CD8-positive, alpha-beta memory T cell (primary cell): ENCODE measurements at regions of chr10 and their contacts with region 1.

Region 1: GRCh38 chr10:69237528-69238159 is 17.5 kb downstream of the HKDC1 start:
- DNase-seq: peak; percentile 66 to 87 (median 78)
- H3K4me3 ChIP-seq: no peak overlapping the region
- H3K4me3 Mint-ChIP-seq: no peak overlapping the region
- H3K27ac ChIP-seq: no peak overlapping the region
- H3K27ac Mint-ChIP-seq: peak overlapping the region in 2 of 8 donors; percentile 6 to 8
- H3K4me1 ChIP-seq: peaks cover 20% of the 10 kb centered on the region
- H3K4me1 Mint-ChIP-seq: peaks cover 12 to 21% (median 16%) of the 10 kb centered on the region in 3 donors
- H3K27me3 ChIP-seq: no peaks in the 10 kb centered on the region
- H3K27me3 Mint-ChIP-seq: peaks cover 0 to 2% of the 10 kb centered on the region in 2 donors

Region 2: GRCh38 chr10:69061305-69062161 is 176.1 kb before region 1 on chr10:
- CTCF ChIA-PET with region 1: no interaction called
- POLR2A ChIA-PET with region 1: no interaction called
- DNase-seq: peak in 3 of 5 donors; percentile 38 to 52 (median 41)
- H3K4me3 ChIP-seq: peak overlapping the region; percentile 29
- H3K4me3 Mint-ChIP-seq: peak overlapping the region; percentile 47 to 86 (median 75)
- H3K27ac ChIP-seq: peak overlapping the region; percentile 10
- H3K27ac Mint-ChIP-seq: peak overlapping the region; percentile 57 to 95 (median 88)
- H3K4me1 ChIP-seq: peaks cover 31% of the 10 kb centered on the region
- H3K4me1 Mint-ChIP-seq: peaks cover 30 to 41% (median 33%) of the 10 kb centered on the region in 3 donors
- H3K27me3 ChIP-seq: no peaks in the 10 kb centered on the region
- H3K27me3 Mint-ChIP-seq: no peaks in the 10 kb centered on the region

Region 3: DNA sequence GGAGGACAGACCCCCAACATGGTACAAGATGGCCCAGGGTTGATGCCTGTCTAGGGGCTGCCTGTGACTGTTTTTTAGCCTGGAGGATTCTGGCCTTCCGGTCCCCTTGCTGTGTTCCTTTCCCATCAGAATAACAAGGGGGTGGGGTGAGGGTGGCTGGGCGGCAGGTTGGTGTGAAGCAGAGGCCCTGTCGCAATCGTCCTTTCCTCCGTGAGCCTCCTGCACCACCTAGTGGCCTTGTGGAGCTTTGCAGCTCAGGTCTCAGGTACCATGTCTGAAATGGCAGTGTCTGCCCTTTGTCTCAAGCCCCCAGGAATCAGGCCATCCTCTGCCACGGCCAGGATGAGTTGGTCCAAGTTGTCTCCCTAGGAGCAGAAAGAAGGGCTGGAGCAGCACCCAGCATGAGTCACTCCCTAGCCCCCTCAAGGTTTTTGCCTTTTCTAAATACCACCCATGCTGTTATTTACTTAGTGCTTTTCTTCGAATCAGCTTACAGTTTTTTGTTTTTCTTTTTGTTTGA is 154.9 kb after region 1 on chr10:
- CTCF ChIA-PET with region 1: interaction called, 103 read pairs
- POLR2A ChIA-PET with region 1: interaction called, 4 read pairs
- DNase-seq: peak; percentile 62 to 86 (median 73)
- H3K4me3 ChIP-seq: no peak overlapping the region
- H3K4me3 Mint-ChIP-seq: no peak overlapping the region
- H3K27ac ChIP-seq: no peak overlapping the region
- H3K27ac Mint-ChIP-seq: peak overlapping the region; percentile 74 to 92 (median 84)
- H3K4me1 ChIP-seq: peaks cover 13% of the 10 kb centered on the region
- H3K4me1 Mint-ChIP-seq: peaks cover 11 to 15% (median 13%) of the 10 kb centered on the region in 3 donors
- H3K27me3 ChIP-seq: no peaks in the 10 kb centered on the region
- H3K27me3 Mint-ChIP-seq: no peaks in the 10 kb centered on the region

Region 4: GRCh38 chr10:69573056-69573806 is 335.6 kb after region 1 on chr10 and contains the start of gene NEUROG3:
- CTCF ChIA-PET with region 1: no interaction called
- POLR2A ChIA-PET with region 1: no interaction called
- DNase-seq: no peak
- H3K4me3 ChIP-seq: peak within 1 kb of the TSS; percentile 45
- H3K4me3 Mint-ChIP-seq: peak within 1 kb of the TSS; percentile 78 to 86 (median 85)
- H3K27ac ChIP-seq: no peak within 1 kb of the TSS
- H3K27ac Mint-ChIP-seq: no peak within 1 kb of the TSS
- H3K4me1 ChIP-seq: peaks cover 20% of the 10 kb centered on the region
- H3K4me1 Mint-ChIP-seq: peaks cover 22 to 39% (median 24%) of the 10 kb centered on the region in 3 donors
- H3K27me3 ChIP-seq: peaks cover 53% of the 10 kb centered on the region
- H3K27me3 Mint-ChIP-seq: peaks cover 70 to 84% of the 10 kb centered on the region in 2 donors
- total RNA-seq, gene NEUROG3: not detected